Ascending aorta (tissue), 2 donors: ENCODE measurements at regions of chr18 and their contacts with region 1.

Region 1: GRCh38 chr18:57768537-57769326 is 34.4 kb downstream of the ATP8B1 start:
- DNase-seq: peak in 1 of 2 donors; percentile 64
- H3K4me3 ChIP-seq: peak overlapping the region in 1 of 2 donors; percentile 13
- H3K27ac ChIP-seq: peak overlapping the region; percentile 90 to 92
- H3K4me1 ChIP-seq: peaks cover 15 to 45% of the 10 kb centered on the region in 2 donors
- H3K27me3 ChIP-seq: no peaks in the 10 kb centered on the region
- CTCF ChIP-seq: no peak

Region 2: DNA sequence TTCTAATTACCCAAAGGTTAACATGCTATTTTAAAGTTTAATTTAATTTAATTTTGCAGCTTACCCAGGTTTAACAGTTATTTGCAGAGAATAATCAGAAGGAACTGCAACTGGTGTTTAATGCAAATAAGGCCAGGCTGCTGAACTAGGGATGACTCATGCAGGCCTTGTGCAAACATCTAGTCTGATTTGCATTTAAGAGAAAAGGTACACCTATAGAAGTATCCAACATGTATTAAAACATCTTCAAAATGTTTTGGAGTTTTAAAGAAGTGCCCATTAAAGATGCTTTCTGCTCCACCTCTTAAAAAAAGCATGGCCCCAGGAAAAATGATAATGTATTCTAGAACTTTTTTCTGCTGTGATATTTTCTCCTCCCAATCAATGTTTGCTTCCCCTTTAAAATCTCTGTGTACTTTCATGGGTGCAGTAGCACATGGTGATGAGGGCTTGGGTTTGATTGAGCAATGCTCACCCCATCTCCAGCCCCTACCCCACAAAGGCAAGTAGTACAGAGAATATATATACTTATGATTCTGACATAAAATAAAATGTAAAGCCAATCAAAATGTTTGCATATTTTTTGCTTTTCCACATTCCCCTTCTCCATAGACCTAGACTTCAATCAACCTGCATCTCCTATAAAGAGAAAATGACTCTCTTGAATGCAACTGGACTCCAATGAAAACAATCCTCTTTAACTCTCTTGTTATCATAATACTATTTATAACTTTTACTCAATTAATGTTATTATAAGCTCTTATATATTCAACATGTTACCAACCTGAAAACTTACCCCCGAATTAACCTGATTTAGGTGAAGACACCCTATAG is 19.7 kb before region 1 on chr18:
- intact Hi-C with region 1: loop called (anchors 2 kb)
- DNase-seq: no peak
- H3K4me3 ChIP-seq: no peak overlapping the region
- H3K27ac ChIP-seq: peak overlapping the region; percentile 70 to 88
- H3K4me1 ChIP-seq: peaks cover 9 to 41% of the 10 kb centered on the region in 2 donors
- H3K27me3 ChIP-seq: no peaks in the 10 kb centered on the region
- CTCF ChIP-seq: no peak

Region 3: DNA sequence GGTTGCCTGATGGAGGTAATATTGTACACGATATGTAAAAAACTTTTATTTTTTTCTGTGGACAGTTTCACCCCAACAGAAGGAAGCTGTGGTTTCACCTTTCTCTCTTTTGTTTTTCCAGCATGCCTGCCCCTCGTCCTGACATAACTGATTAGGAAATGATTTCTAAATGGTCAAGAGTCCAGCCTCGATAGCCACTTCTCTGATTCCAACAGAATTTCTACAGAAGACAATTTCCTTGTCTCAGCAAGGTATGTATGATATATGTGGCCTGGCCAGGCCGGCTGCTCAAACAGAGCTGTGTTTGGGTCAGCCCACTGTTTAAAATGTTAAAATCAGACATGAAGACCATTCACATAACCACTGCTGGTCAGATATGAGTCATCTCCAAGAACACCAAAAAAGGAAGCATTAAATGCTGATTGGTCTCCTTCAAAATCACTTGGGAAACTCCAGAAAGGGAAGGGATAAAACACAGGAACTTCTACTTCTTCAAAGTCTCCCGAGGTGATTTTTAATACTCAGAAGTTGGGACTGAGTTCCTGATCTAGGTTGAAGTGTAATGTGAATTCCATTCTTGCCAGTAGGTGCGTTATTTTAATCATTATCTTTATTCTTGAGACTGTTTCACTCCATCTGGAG is 12.1 kb after region 1 on chr18:
- intact Hi-C with region 1: loop called (anchors 1 kb)
- DNase-seq: peak in 1 of 2 donors; percentile 68
- H3K4me3 ChIP-seq: peak overlapping the region in 1 of 2 donors; percentile 31
- H3K27ac ChIP-seq: peak overlapping the region; percentile 81 to 88
- H3K4me1 ChIP-seq: peaks cover 20 to 47% of the 10 kb centered on the region in 2 donors
- H3K27me3 ChIP-seq: no peaks in the 10 kb centered on the region
- CTCF ChIP-seq: no peak